Heart left ventricle (tissue), 16 donors: ENCODE measurements at regions of chr4 and their contacts with region 1.

Region 1: GRCh38 chr4:86934771-86935565 is at the start of gene AFF1:
- DNase-seq: peak; percentile 94 to 97 (median 96)
- ATAC-seq: peak; percentile 94 to 97 (median 94)
- H3K4me3 ChIP-seq: peak within 1 kb of the TSS; percentile 58 to 98 (median 94)
- H3K27ac ChIP-seq: peak within 1 kb of the TSS; percentile 87 to 100 (median 98)
- H3K4me1 ChIP-seq: peaks cover 6 to 49% (median 36%) of the 10 kb centered on the region in 12 donors
- H3K27me3 ChIP-seq: no peaks in the 10 kb centered on the region
- CTCF ChIP-seq: peak; percentile 29 to 83 (median 52)
- POLR2A ChIP-seq: peak; percentile 73 to 95
- total RNA-seq, gene AFF1: 55.8 to 96.5 (median 73.3) TPM

Region 2: GRCh38 chr4:86972997-86973396 is 38.0 kb after region 1 on chr4:
- intact Hi-C with region 1: loop called in 1 of 10 experiments (anchors 5 kb)
- DNase-seq: peak in 2 of 5 donors; percentile 12 to 39
- ATAC-seq: peak; percentile 64 to 88 (median 70)
- H3K4me3 ChIP-seq: no peak overlapping the region
- H3K27ac ChIP-seq: no peak overlapping the region
- H3K4me1 ChIP-seq: peaks cover 0 to 61% (median 28%) of the 10 kb centered on the region in 12 donors
- H3K27me3 ChIP-seq: no peaks in the 10 kb centered on the region
- CTCF ChIP-seq: no peak
- POLR2A ChIP-seq: no peak